ENCODE measurements at regions of chr20 and their contacts with region 1.

Region 1: GRCh38 chr20:57498425-57499400 is 26.2 kb downstream of the CTCFL start:
- DNase-seq: peak in 5 of 9 donors; percentile 19 to 43 (median 24)
- ATAC-seq: peak; percentile 78
- H3K4me3 ChIP-seq: no peak overlapping the region
- H3K4me3 Mint-ChIP-seq: peak overlapping the region in 5 of 10 donors; percentile 3 to 33 (median 20)
- H3K27ac ChIP-seq: no peak overlapping the region
- H3K27ac Mint-ChIP-seq: peak overlapping the region in 2 of 9 donors; percentile 55 to 60
- H3K4me1 ChIP-seq: peaks cover 6 to 11% of the 10 kb centered on the region in 2 donors
- H3K4me1 Mint-ChIP-seq: peaks cover 12 to 15% (median 13%) of the 10 kb centered on the region in 7 donors
- H3K27me3 ChIP-seq: peaks cover 0 to 5% of the 10 kb centered on the region in 2 donors
- H3K27me3 Mint-ChIP-seq: peaks cover 11 to 72% (median 30%) of the 10 kb centered on the region in 5 donors

Region 2: GRCh38 chr20:56893226-56893912 is 605.3 kb before region 1 on chr20:
- CTCF ChIA-PET with region 1: no interaction called
- POLR2A ChIA-PET with region 1: no interaction called
- intact Hi-C with region 1: no loop called
- DNase-seq: peak in 3 of 9 donors; percentile 5 to 27 (median 26)
- ATAC-seq: no peak
- H3K4me3 ChIP-seq: no peak overlapping the region
- H3K4me3 Mint-ChIP-seq: peak overlapping the region in 3 of 10 donors; percentile 30 to 54 (median 53)
- H3K27ac ChIP-seq: no peak overlapping the region
- H3K27ac Mint-ChIP-seq: peak overlapping the region in 5 of 9 donors; percentile 40 to 78 (median 53)
- H3K4me1 ChIP-seq: no peaks in the 10 kb centered on the region
- H3K4me1 Mint-ChIP-seq: peaks cover 0 to 22% (median 16%) of the 10 kb centered on the region in 7 donors
- H3K27me3 ChIP-seq: no peaks in the 10 kb centered on the region
- H3K27me3 Mint-ChIP-seq: peaks cover 0 to 10% (median 3%) of the 10 kb centered on the region in 5 donors

Region 3: DNA sequence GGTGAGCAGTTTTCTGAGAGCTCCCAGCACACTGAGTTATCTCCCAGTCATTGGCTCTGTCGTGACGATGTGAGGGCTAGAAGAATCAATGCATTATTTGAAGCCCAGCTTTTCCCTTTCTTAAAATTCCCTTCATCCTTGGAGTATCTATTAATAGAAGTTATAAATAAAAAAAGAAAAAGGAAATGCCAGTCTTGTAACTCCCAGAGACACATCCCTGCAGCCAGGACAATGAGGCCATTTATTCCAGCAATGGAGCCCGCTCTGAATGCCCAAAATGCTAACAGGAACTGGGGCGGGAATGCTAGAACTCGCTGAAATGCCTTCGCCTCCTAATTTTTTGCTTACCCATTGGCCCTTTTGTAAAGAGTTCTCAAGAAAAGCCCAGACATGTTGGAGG is 563.8 kb before region 1 on chr20:
- CTCF ChIA-PET with region 1: no interaction called
- POLR2A ChIA-PET with region 1: no interaction called
- intact Hi-C with region 1: no loop called
- DNase-seq: no peak
- ATAC-seq: no peak
- H3K4me3 ChIP-seq: no peak overlapping the region
- H3K4me3 Mint-ChIP-seq: no peak overlapping the region
- H3K27ac ChIP-seq: no peak overlapping the region
- H3K27ac Mint-ChIP-seq: no peak overlapping the region
- H3K4me1 ChIP-seq: no peaks in the 10 kb centered on the region
- H3K4me1 Mint-ChIP-seq: no peaks in the 10 kb centered on the region
- H3K27me3 ChIP-seq: no peaks in the 10 kb centered on the region
- H3K27me3 Mint-ChIP-seq: peaks cover 6 to 52% (median 32%) of the 10 kb centered on the region in 5 donors

Region 4: DNA sequence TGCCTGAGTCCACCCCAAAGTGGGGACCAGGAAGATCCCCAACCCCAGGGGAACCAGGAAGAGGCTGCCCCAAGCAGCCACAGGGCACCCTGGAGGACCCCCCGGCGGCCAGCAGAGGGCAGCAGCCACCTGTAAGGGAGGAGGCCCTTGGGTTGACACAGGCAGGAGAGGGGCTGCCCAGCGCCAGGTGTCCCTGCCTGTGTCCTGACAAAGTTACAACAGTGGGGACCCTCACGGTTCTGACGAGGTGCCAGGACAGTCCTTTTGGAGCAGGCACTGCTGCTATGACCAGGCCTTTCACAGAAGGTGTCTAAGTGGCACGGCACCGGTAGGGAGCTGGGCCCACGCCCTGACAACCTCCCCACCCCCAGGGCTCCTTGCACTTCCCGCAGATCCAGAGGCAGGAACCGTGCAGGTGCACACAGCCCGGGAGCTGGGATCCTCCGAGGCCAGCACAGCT is 409.0 kb before region 1 on chr20:
- CTCF ChIA-PET with region 1: interaction called, 6 read pairs
- POLR2A ChIA-PET with region 1: no interaction called
- intact Hi-C with region 1: loop called in 1 of 2 experiments (anchors 1 kb)
- DNase-seq: peak; percentile 7 to 69 (median 39)
- ATAC-seq: peak; percentile 64
- H3K4me3 ChIP-seq: no peak overlapping the region
- H3K4me3 Mint-ChIP-seq: no peak overlapping the region
- H3K27ac ChIP-seq: no peak overlapping the region
- H3K27ac Mint-ChIP-seq: no peak overlapping the region
- H3K4me1 ChIP-seq: no peaks in the 10 kb centered on the region
- H3K4me1 Mint-ChIP-seq: peaks cover 4 to 28% (median 13%) of the 10 kb centered on the region in 7 donors
- H3K27me3 ChIP-seq: no peaks in the 10 kb centered on the region
- H3K27me3 Mint-ChIP-seq: peaks cover 0 to 23% (median 13%) of the 10 kb centered on the region in 5 donors

Region 5: DNA sequence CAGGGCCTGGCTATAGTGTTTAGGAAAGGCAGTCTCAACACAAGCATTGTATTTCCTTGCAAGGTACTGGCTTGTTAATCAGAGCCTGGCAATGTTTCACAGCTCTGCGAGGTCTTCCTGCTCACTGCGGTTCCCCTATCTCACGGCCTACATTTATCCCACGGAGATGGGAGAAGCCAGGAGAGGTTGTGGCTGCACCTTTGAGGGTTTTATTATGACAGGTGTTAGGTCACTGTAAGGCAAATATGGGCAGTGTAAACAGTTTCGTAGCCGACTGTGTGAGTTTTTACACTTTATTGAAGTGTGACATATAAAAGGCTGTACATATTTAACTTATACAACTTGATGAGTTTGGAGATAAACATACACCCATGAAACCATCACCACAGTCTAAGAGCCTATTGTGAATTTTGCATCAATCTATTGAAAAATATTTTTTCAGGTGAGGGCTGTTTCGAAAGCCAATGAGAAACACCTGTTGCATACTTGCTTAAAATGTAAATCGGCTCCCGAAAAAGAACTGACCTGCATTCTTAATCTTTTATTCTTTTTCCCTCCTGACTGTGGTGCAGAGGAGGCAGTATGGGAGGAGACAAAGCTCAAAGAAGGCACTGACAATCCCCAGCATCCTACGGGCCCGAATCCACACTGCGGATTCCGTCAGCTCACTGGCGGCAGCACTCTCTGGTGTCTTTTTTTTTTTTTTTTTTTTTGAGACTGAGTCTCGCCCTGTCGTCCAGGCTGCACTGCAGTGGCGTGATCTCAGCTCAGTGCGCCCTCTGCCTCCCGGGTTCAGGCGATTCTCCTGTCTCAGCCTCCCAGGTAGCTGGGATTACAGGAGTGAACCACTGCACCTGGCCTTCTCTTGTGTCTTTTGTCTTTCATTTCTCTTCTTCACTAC is 115.0 kb before region 1 on chr20:
- CTCF ChIA-PET with region 1: interaction called, 21 read pairs
- POLR2A ChIA-PET with region 1: interaction called, 3 read pairs
- intact Hi-C with region 1: loop called (anchors 1 kb)
- DNase-seq: no peak
- ATAC-seq: no peak
- H3K4me3 ChIP-seq: no peak overlapping the region
- H3K4me3 Mint-ChIP-seq: no peak overlapping the region
- H3K27ac ChIP-seq: no peak overlapping the region
- H3K27ac Mint-ChIP-seq: peak overlapping the region in 3 of 9 donors; percentile 45 to 77 (median 71)
- H3K4me1 ChIP-seq: peaks cover 6 to 12% of the 10 kb centered on the region in 2 donors
- H3K4me1 Mint-ChIP-seq: peaks cover 7 to 32% (median 20%) of the 10 kb centered on the region in 7 donors
- H3K27me3 ChIP-seq: no peaks in the 10 kb centered on the region
- H3K27me3 Mint-ChIP-seq: no peaks in the 10 kb centered on the region

Region 6: DNA sequence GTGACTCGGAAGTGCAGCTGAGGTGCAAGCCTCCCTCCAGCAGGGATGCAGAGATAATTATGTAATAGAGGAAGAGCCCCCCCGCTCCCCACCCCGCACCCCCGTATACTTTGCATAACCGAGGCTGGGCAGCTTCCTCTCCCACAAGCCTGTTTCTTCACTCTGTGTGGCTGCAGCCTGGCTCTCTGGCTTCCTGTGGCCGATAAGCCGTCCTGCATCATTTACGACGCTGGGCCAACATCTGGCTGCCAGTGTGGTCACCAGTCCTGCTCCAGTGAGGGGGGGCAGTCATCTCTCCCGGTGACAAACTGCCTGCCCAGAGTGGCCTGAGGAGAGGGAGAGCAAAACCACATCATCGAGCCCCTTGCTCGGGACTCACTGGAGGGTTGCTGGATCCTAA is 48.3 kb before region 1 on chr20:
- CTCF ChIA-PET with region 1: no interaction called
- POLR2A ChIA-PET with region 1: no interaction called
- intact Hi-C with region 1: loop called in 1 of 2 experiments (anchors 5 kb)
- DNase-seq: peak in 4 of 9 donors; percentile 15 to 28 (median 18)
- ATAC-seq: peak; percentile 87
- H3K4me3 ChIP-seq: peak overlapping the region; percentile 19
- H3K4me3 Mint-ChIP-seq: peak overlapping the region; percentile 41 to 79 (median 70)
- H3K27ac ChIP-seq: no peak overlapping the region
- H3K27ac Mint-ChIP-seq: peak overlapping the region; percentile 34 to 89 (median 73)
- H3K4me1 ChIP-seq: peaks cover 16 to 37% of the 10 kb centered on the region in 2 donors
- H3K4me1 Mint-ChIP-seq: peaks cover 26 to 52% (median 46%) of the 10 kb centered on the region in 7 donors
- H3K27me3 ChIP-seq: no peaks in the 10 kb centered on the region
- H3K27me3 Mint-ChIP-seq: peaks cover 0 to 29% (median 0%) of the 10 kb centered on the region in 5 donors

Measured in naive thymus-derived CD4-positive, alpha-beta T cell (primary cell).